ENCODE measurements at regions of chr4 and their contacts with region 1.

Region 1: GRCh38 chr4:68175562-68176155 is 46.0 kb upstream of the TMPRSS11F start:
- DNase-seq: peak; percentile 75
- H3K4me3 Mint-ChIP-seq: no peak overlapping the region
- H3K27ac Mint-ChIP-seq: no peak overlapping the region
- H3K4me1 Mint-ChIP-seq: peaks cover 3% of the 10 kb centered on the region
- H3K27me3 Mint-ChIP-seq: peaks cover 21% of the 10 kb centered on the region

Region 2: DNA sequence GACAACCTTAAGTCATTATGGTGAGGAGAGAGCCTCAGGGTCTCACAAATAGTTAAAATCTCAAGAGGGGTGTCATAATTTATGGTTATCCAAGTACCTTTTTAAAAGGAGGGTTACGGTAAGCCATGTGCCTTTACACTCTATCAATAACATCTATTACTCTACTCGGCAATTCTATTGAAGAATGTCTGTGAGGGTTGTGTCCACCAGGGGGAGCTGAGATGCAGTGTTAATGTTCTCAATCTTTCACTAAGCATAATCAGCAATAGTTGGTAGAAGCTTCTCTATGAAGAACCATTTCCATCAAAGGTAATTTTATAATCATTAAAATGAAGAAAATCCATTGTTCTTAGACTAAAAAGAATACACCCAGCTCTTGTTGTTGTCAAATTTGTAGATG is 1087.8 kb before region 1 on chr4:
- CTCF ChIA-PET with region 1: no interaction called
- intact Hi-C with region 1: loop called (anchors 10 kb)
- DNase-seq: peak; percentile 72
- H3K4me3 Mint-ChIP-seq: no peak overlapping the region
- H3K27ac Mint-ChIP-seq: no peak overlapping the region
- H3K4me1 Mint-ChIP-seq: no peaks in the 10 kb centered on the region
- H3K27me3 Mint-ChIP-seq: no peaks in the 10 kb centered on the region

Region 3: DNA sequence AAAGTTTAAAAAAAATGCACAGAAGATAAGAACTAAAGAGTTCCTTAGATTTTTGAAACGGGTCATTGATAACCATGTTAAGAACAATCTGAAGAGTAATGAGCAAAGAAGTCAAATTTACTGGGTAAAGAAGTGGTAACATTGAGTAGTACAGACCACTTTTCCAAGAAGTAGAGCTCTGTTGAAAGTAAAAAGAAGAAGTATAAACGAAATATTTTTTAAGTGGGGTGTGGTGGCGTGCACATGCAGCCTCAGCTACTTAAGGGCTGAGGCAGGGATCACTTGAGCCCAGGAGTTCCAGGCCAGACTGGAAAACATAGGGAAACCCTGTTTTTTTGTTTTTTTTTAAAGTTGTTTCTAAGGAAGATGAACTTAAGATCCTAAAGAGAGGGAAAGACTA is 543.2 kb before region 1 on chr4:
- CTCF ChIA-PET with region 1: no interaction called
- intact Hi-C with region 1: no loop called
- DNase-seq: no peak
- H3K4me3 Mint-ChIP-seq: no peak overlapping the region
- H3K27ac Mint-ChIP-seq: no peak overlapping the region
- H3K4me1 Mint-ChIP-seq: no peaks in the 10 kb centered on the region
- H3K27me3 Mint-ChIP-seq: no peaks in the 10 kb centered on the region

Region 4: DNA sequence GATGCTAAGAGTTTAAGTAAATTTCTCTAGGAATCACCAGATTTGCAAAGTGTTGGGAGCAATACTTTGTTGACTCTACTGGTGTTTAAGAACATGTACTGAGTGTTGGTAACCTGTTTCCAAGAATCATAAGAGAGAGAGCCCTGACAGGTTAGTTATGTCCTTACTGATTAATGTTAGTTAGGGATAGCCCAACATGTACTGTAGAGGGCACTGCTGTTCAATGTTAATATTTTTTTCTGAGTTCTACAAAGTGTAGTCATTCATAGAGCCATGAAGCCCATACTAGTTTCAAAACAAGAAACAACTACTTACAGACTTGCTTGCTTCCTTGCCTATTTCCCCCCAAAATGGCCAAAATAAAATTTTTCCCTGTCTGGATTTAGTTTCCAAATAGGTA is 303.8 kb before region 1 on chr4:
- CTCF ChIA-PET with region 1: interaction called, 3 read pairs
- intact Hi-C with region 1: loop called (anchors 1 kb)
- DNase-seq: no peak
- H3K4me3 Mint-ChIP-seq: no peak overlapping the region
- H3K27ac Mint-ChIP-seq: no peak overlapping the region
- H3K4me1 Mint-ChIP-seq: no peaks in the 10 kb centered on the region
- H3K27me3 Mint-ChIP-seq: peaks cover 9% of the 10 kb centered on the region

Region 5: GRCh38 chr4:67918428-67918827 is 257.2 kb before region 1 on chr4:
- CTCF ChIA-PET with region 1: no interaction called
- intact Hi-C with region 1: loop called (anchors 1 kb)
- DNase-seq: no peak
- H3K4me3 Mint-ChIP-seq: no peak overlapping the region
- H3K27ac Mint-ChIP-seq: no peak overlapping the region
- H3K4me1 Mint-ChIP-seq: no peaks in the 10 kb centered on the region
- H3K27me3 Mint-ChIP-seq: peaks cover 4% of the 10 kb centered on the region

Region 6: GRCh38 chr4:67988991-67989390 is 186.7 kb before region 1 on chr4:
- CTCF ChIA-PET with region 1: interaction called, 3 read pairs
- intact Hi-C with region 1: loop called (anchors 1 kb)
- DNase-seq: no peak
- H3K4me3 Mint-ChIP-seq: no peak overlapping the region
- H3K27ac Mint-ChIP-seq: no peak overlapping the region
- H3K4me1 Mint-ChIP-seq: peaks cover 2% of the 10 kb centered on the region
- H3K27me3 Mint-ChIP-seq: peaks cover 3% of the 10 kb centered on the region

Region 7: GRCh38 chr4:68375667-68376559 is 200.3 kb after region 1 on chr4:
- CTCF ChIA-PET with region 1: no interaction called
- intact Hi-C with region 1: loop called (anchors 5 kb)
- DNase-seq: peak; percentile 64
- H3K4me3 Mint-ChIP-seq: peak overlapping the region; percentile 62
- H3K27ac Mint-ChIP-seq: no peak overlapping the region
- H3K4me1 Mint-ChIP-seq: peaks cover 12% of the 10 kb centered on the region
- H3K27me3 Mint-ChIP-seq: no peaks in the 10 kb centered on the region

Region 8: DNA sequence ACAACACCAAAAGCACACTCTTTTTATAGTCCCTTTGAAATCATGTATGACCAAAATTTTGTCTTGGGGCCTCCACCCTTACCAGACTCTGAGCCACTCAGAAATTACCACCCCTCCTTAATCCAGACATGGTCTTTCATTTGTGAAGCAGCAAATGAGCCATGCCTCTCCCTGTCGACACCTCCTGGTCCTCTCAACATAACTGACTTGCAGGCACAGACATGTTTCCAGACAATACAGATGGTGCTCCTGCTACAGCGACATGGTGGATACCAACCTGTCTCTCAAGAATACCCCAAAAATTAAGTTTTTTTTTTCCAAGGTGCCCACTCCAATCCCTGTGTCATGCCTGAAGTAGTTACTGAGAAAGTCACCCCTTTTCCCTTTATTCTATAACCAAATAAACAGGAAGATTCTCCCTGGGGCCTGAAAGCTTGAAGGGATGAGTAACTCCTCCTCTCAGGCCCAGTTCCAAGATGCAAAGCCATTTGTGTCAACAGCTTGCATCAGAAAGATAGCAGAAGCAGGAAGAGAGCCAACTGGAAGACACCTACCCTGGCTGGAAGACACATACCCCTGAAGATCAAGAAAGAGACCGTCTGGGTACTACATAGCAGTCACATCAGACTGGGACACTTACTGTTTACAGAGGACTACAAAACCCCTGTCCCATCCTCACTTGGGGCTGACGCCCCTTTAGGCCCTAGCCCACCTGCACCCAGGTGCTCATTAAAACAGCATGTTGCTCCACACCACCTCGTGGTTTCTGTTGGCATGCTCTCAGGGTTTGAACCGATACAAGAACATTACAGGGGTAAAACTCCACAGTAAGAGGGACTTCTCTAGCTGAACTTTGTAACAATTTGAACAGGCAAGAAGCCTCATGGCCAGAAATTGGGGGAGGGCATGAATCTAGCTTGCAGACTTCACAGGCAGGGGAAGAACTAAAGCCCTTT is 406.0 kb after region 1 on chr4:
- CTCF ChIA-PET with region 1: no interaction called
- intact Hi-C with region 1: no loop called
- DNase-seq: no peak
- H3K4me3 Mint-ChIP-seq: no peak overlapping the region
- H3K27ac Mint-ChIP-seq: no peak overlapping the region
- H3K4me1 Mint-ChIP-seq: no peaks in the 10 kb centered on the region
- H3K27me3 Mint-ChIP-seq: peaks cover 6% of the 10 kb centered on the region

Measured in activated naive CD4-positive, alpha-beta T cell treated with anti-CD3 and anti-CD28 coated beads for 36 hours (primary cell).